ENCODE measurements at regions of chrX and their contacts with region 1.

Region 1: DNA sequence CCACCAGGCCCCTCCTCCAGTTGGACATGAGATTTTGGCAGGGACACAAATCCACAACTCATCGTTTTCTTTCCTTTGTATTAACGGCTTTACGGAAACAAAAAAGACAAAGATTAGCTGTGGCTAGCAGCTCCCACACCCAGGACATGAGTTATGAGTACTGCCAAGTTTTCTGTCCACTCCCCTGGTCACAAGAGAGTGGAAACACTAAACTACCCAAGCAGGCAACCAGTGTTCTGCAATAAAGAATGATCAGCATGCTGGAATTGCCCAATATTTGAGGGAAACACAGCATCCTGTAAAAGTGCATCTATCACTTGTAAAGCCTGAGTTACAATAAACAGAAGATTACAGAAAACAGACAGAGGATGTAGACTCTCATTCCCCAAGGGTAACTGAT is 358.4 kb downstream of the NLGN4X start:
- DNase-seq: no peak

Region 2: GRCh38 chrX:4240541-4241194 is 1629.6 kb before region 1 on chrX:
- intact Hi-C with region 1: no loop called
- DNase-seq: no peak

Region 3: GRCh38 chrX:5857232-5857631 is 13.0 kb before region 1 on chrX:
- intact Hi-C with region 1: loop called in 1 of 2 experiments (anchors 1 kb)
- DNase-seq: no peak

Region 4: GRCh38 chrX:5936438-5936837 is 66.2 kb after region 1 on chrX:
- intact Hi-C with region 1: no loop called
- DNase-seq: no peak